ENCODE measurements at regions of chr1 and their contacts with region 1.

Region 1: GRCh38 chr1:100459358-100460114 is 78.4 kb upstream of the GPR88 start:
- DNase-seq: peak; percentile 56 to 87
- ATAC-seq: peak; percentile 88 to 89 (median 88)
- H3K4me3 ChIP-seq: no peak overlapping the region
- H3K4me3 Mint-ChIP-seq: no peak overlapping the region
- H3K27ac ChIP-seq: no peak overlapping the region
- H3K27ac Mint-ChIP-seq: peak overlapping the region; percentile 47 to 71
- H3K4me1 ChIP-seq: peaks cover 7% of the 10 kb centered on the region
- H3K4me1 Mint-ChIP-seq: peaks cover 21 to 25% of the 10 kb centered on the region in 2 donors
- H3K27me3 ChIP-seq: no peaks in the 10 kb centered on the region
- H3K27me3 Mint-ChIP-seq: no peaks in the 10 kb centered on the region
- CTCF ChIP-seq: peak; percentile 82

Region 2: DNA sequence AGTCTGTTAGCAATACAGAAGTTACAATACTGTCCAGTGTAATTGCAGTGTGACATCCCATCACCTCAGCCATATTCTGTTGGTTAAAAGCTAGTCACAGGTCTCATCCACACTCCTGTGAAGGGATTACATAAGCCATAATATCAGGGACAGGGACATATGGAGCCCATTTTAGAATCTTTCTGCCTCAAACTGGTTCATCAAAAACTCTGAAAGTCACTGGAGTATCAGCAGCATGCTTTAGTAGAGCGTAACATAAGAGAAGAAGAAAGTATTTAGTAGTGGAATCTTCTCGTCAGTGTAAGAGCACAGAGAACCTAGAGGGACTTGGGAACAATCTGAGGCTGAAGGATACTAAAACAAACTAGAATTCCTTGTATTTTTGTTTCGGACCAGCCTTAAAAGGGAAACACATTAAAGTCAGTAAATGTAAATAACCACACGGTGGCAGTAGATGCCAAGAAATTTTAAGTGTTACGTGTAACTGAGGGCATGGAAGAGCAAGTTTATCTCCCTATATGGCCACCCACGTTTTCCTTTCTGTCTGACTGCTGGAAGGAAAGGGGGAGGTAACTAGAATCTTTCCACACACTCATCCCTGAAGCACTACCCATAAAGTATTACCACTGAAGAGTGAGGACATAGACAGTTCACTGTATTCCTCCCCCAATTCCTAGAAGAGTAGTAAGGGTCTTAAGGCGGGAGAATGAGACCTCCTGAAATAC is 651.0 kb before region 1 on chr1:
- intact Hi-C with region 1: loop called (anchors 2 kb)
- DNase-seq: peak in 1 of 2 donors; percentile 82
- ATAC-seq: peak; percentile 78 to 90 (median 88)
- H3K4me3 ChIP-seq: no peak overlapping the region
- H3K4me3 Mint-ChIP-seq: no peak overlapping the region
- H3K27ac ChIP-seq: no peak overlapping the region
- H3K27ac Mint-ChIP-seq: no peak overlapping the region
- H3K4me1 ChIP-seq: no peaks in the 10 kb centered on the region
- H3K4me1 Mint-ChIP-seq: no peaks in the 10 kb centered on the region
- H3K27me3 ChIP-seq: no peaks in the 10 kb centered on the region
- H3K27me3 Mint-ChIP-seq: peaks cover 7 to 8% of the 10 kb centered on the region in 2 donors
- CTCF ChIP-seq: peak; percentile 84

Region 3: GRCh38 chr1:100277866-100278265 is 181.7 kb before region 1 on chr1:
- intact Hi-C with region 1: loop called (anchors 5 kb)
- DNase-seq: peak in 1 of 2 donors; percentile 61
- ATAC-seq: peak; percentile 55 to 68 (median 59)
- H3K4me3 ChIP-seq: no peak overlapping the region
- H3K4me3 Mint-ChIP-seq: no peak overlapping the region
- H3K27ac ChIP-seq: no peak overlapping the region
- H3K27ac Mint-ChIP-seq: peak overlapping the region in 1 of 2 donors; percentile 29
- H3K4me1 ChIP-seq: no peaks in the 10 kb centered on the region
- H3K4me1 Mint-ChIP-seq: peaks cover 10 to 23% of the 10 kb centered on the region in 2 donors
- H3K27me3 ChIP-seq: no peaks in the 10 kb centered on the region
- H3K27me3 Mint-ChIP-seq: no peaks in the 10 kb centered on the region
- CTCF ChIP-seq: no peak

Measured in natural killer cell (primary cell).